ENCODE measurements at regions of chr3 and their contacts with region 1.

Region 1: DNA sequence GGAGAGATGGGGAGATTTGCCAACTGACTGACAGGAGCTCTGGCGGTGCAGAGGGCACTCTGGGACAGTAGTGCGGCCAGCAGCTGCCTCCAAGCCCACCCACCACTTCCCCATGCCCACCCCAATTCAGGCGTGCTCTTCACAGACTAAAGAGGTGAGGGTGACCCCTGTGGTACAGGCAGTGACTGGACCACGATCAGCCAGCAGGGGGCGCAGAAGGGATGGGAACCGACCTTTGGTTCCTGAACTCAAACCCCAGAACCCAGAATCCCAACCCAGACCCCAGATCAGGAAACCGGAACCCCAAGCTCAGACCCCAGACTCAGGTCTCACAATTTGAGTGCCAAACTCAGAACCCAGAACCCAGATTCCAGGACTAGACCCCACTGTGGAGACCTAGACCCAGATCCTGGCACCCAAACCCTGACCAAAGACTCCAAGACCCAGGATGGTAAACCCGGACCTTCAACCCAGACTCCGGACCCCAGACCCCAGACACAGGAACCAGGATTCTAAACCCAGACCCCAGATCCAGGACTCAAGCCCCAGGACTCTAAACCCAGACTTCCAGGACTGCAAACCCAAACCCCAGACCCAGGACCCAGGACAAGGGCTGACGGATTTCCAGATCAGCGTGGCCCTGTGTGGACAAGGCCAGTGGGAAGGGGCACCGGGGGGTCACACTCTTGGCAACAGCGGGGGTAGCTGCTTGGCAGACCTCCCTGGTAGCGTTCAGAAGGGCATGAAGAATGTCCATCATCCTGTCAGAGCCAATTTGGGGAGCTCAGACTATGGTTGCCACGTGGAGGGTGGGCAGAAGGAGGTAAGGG is 3.7 kb upstream of the MYL3 start:
- DNase-seq: peak; percentile 86
- H3K4me3 ChIP-seq: peak overlapping the region in 1 of 2 experiments; percentile 48; a peak in 1 of 4 replicates
- H3K27ac ChIP-seq: no peak overlapping the region; a peak in 1 of 4 replicates
- H3K4me1 ChIP-seq: peaks cover 0 to 40% of the 10 kb centered on the region in 2 experiments; a peak in 1 of 4 replicates
- H3K27me3 ChIP-seq: no peaks in the 10 kb centered on the region
- CTCF ChIP-seq: peak; percentile 91
- EP300 ChIP-seq: no peak
- RAD21 ChIP-seq: peak; percentile 78

Region 2: DNA sequence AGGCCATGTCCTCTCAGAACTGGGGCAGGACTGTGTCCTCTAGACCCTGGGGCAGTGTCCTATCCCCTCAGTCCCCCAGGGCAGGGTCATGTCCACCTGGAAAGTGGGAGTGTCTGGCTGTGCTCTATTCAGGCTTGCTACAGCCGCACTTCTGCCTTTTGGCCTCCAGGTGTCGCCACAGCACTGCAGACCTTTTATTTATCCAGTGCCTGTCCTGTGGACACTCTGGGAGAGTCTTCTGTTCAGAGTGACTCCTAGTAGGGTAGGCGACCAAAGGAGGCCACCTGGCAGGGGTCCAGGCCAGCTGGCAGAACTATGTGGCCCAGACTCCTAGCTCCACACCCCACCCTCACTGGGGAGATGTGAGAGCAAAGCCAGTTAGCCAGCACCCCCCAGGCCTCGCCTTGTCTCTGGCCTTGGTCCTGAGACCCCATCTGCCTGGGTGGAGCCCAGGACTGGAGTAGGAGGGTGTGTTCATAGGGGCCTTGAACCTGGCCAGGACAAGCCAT is 161.9 kb before region 1 on chr3:
- CTCF ChIA-PET with region 1: interaction called, 26 read pairs
- POLR2A ChIA-PET with region 1: no interaction called
- DNase-seq: peak; percentile 81
- H3K4me3 ChIP-seq: no peak overlapping the region; a peak in 1 of 4 replicates
- H3K27ac ChIP-seq: no peak overlapping the region
- H3K4me1 ChIP-seq: peaks cover 0 to 32% of the 10 kb centered on the region in 2 experiments; a peak in 1 of 4 replicates
- H3K27me3 ChIP-seq: peaks cover 14% of the 10 kb centered on the region
- CTCF ChIP-seq: peak; percentile 94
- EP300 ChIP-seq: no peak
- RAD21 ChIP-seq: peak; percentile 97

Region 3: DNA sequence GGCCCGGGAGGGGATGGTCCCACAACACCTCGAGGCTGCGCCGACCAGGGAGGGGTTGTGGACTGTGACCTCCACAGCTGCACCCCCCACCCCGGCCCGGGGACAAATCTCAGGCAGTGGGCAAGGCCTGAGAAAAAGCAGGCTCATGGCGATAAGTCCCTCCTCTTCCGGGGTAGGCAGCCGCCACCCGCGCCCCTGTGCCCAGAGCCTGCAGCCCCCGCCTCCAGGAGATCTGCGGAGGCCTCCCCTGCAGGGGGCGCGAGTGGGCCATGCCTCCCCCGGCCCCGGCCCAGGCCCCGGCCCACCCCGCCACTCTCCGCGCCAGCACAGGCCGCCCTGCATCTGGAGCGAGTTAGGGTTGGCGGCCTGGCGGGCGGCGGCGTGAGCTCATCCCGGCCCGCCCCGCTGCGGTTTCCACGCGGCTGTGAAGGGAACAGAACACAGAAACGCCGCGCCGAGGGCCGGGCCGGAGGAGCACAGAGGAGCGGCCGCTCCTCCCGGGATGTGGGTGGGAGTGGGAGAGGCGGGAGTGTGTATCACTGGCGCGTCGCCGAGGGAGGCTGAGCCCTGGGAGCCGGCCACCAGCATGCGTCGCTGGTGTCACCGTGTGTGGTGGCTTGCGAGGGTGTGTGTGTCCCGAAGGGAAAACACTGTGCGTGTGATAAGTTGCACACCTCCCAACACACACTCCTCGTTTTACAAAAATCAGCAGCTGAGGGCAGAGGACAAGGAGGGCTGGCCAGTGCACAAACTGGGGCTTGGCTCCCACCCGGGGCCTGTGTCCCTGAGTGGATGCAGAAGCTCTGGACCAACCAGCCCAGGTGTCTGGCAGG is 20.9 kb before region 1 on chr3:
- CTCF ChIA-PET with region 1: interaction called, 69 read pairs
- POLR2A ChIA-PET with region 1: interaction called, 5 read pairs
- DNase-seq: peak; percentile 98
- H3K4me3 ChIP-seq: peak overlapping the region; percentile 46 to 49; a peak in 3 of 4 replicates
- H3K27ac ChIP-seq: peak overlapping the region; percentile 38 to 98
- H3K4me1 ChIP-seq: peaks cover 0 to 27% of the 10 kb centered on the region in 2 experiments; a peak in 2 of 4 replicates
- H3K27me3 ChIP-seq: no peaks in the 10 kb centered on the region
- CTCF ChIP-seq: peak; percentile 53
- EP300 ChIP-seq: peak in 1 of 2 experiments; percentile 21; a peak in 1 of 4 replicates
- RAD21 ChIP-seq: peak; percentile 64

Region 4: DNA sequence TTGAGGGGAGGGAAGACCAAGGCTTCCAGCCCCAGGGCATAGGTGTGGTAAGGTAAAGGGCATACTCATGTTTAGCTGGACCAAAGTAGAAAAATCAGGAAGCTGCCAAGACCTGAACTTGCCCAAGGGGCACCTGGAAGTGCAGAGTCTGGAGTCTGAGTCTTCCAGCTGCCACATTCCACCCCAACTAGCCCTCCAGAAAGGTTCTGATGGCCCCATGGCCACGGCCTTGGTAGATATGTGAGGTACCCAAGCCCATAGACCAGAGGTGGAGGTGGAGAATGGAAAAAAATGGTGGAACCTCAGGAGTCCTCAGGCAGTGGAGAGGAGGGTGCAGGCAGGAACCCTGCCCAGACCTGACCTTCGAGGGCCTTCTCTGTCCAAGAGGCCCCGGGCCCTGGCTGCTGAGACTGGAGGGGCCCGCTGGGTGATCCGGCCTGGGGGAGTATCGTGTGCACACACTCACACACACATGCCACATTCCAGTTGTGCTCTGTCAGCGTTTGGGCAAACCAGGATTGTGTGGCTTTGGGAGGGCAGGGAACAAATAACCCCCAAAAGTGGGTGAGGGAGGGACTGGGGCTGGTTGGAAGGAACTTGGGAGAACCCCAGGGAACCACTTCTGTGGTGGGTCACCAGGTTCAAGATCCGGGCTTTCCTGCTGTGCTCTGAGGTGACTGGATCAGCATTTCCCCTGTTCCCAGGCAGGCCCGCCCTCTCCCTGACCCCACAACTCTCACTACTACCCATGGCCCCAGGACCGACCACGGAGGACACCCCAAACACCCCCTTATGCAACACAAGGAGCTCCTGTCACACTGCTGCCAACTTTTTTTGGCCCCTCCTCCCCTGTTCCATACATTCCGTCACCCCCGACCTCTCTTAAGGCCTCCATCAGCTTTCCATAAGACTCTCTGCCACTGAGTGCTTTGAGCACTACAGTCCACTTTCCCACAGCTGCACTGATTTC is 15.3 kb before region 1 on chr3:
- CTCF ChIA-PET with region 1: interaction called, 69 read pairs
- POLR2A ChIA-PET with region 1: no interaction called
- DNase-seq: no peak
- H3K4me3 ChIP-seq: no peak overlapping the region
- H3K27ac ChIP-seq: no peak overlapping the region
- H3K4me1 ChIP-seq: peaks cover 0 to 13% of the 10 kb centered on the region in 2 experiments; a peak in 2 of 4 replicates
- H3K27me3 ChIP-seq: no peaks in the 10 kb centered on the region; the same call in 1 of the 2 replicates
- CTCF ChIP-seq: no peak
- EP300 ChIP-seq: no peak
- RAD21 ChIP-seq: no peak

Region 5: DNA sequence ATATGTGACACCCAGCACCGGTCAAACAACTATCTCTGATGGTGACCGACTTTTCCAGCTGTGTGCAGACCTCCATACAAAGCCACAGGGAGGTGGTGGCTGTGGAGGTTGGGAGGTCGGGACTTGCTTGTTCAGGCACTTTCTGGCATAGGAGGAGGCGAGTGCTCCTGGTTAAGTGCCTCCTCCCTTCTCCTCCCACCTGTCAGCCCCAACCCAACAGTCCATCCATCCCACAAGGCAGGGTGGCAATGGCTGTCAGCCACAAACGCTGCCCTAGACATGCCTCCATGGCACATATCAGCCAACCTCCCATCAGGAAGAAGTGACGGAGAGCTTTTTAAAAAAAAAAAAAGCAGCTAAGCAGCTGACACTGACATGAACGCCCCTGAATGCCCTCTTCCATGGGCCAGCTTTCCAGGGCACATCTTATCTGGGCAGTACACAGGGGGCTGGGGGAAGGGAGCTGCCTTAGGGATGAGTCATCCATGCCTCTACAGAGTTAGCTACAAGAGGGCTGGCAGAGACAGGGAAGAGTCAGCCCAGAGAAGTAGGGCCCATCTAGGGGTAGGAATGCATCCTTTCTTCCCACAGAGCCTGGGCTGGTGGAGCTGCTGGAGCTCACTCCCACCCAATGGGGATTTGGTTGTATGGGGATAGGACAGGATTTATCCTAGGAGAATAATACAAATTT is 68.4 kb after region 1 on chr3:
- CTCF ChIA-PET with region 1: interaction called, 10 read pairs
- POLR2A ChIA-PET with region 1: no interaction called
- DNase-seq: peak; percentile 64
- H3K4me3 ChIP-seq: no peak overlapping the region
- H3K27ac ChIP-seq: peak overlapping the region; percentile 89 to 91
- H3K4me1 ChIP-seq: peaks cover 53 to 54% of the 10 kb centered on the region in 2 experiments
- H3K27me3 ChIP-seq: no peaks in the 10 kb centered on the region
- CTCF ChIP-seq: peak; percentile 82
- EP300 ChIP-seq: peak; percentile 50 to 75; a peak in 2 of 4 replicates
- RAD21 ChIP-seq: peak; percentile 39; the same call in 1 of the 2 replicates

Region 6: GRCh38 chr3:47047673-47048072 is 180.7 kb after region 1 on chr3:
- CTCF ChIA-PET with region 1: no interaction called
- POLR2A ChIA-PET with region 1: no interaction called
- DNase-seq: no peak
- H3K4me3 ChIP-seq: no peak overlapping the region
- H3K27ac ChIP-seq: no peak overlapping the region
- H3K4me1 ChIP-seq: no peaks in the 10 kb centered on the region
- H3K27me3 ChIP-seq: no peaks in the 10 kb centered on the region
- CTCF ChIP-seq: no peak
- EP300 ChIP-seq: no peak
- RAD21 ChIP-seq: no peak

Measured in SK-N-SH (cell line).